HEK293 (cell line): ENCODE measurements at regions of chr4 and their contacts with region 1.

Region 1: GRCh38 chr4:147761218-147761883 is 29.5 kb downstream of the ARHGAP10 start:
- H3K4me3 ChIP-seq: no peak overlapping the region
- H3K27ac ChIP-seq: no peak overlapping the region
- H3K4me1 ChIP-seq: peaks cover 11% of the 10 kb centered on the region; the same call in 1 of the 2 replicates
- CTCF ChIP-seq: no peak

Region 2: DNA sequence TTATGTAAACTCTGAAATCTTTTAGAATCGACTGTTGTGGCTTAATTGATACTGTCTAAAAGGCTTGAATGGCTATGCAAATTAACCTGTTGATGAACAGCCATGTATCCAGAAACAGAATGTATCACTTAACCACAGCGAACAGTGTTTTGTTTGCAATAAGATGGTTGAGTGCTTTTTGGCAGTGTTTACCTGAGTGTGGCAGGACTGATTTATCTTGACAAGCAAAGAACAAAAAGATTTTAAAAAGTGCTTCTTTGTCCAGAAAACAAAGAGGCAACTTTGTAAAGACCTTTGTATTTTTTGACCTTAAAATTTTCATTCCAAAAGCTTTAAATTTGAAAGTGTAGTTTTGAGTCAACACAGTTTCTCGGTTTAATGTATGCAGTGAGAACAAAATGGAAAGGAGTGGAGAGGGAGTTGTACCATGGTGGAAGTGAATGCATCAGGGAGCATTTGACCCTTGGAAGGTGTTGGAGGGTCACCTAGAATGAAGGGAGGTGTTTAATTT is 11.5 kb before region 1 on chr4:
- CTCF ChIA-PET with region 1: interaction called, 4 read pairs
- POLR2A ChIA-PET with region 1: interaction called, 10 read pairs
- H3K4me3 ChIP-seq: no peak overlapping the region
- H3K27ac ChIP-seq: no peak overlapping the region
- H3K4me1 ChIP-seq: peaks cover 17% of the 10 kb centered on the region
- CTCF ChIP-seq: no peak

Region 3: GRCh38 chr4:147916351-147916750 is 155.0 kb after region 1 on chr4:
- CTCF ChIA-PET with region 1: no interaction called
- POLR2A ChIA-PET with region 1: no interaction called
- H3K4me3 ChIP-seq: no peak overlapping the region
- H3K27ac ChIP-seq: no peak overlapping the region
- H3K4me1 ChIP-seq: no peaks in the 10 kb centered on the region
- CTCF ChIP-seq: no peak